CD14-positive monocyte (primary cell): ENCODE measurements at regions of chr5 and their contacts with region 1.

Region 1: GRCh38 chr5:76867827-76868693 is 18.2 kb downstream of the S100Z start:
- DNase-seq: peak; percentile 40 to 65 (median 50)
- H3K4me3 ChIP-seq: no peak overlapping the region
- H3K4me3 Mint-ChIP-seq: no peak overlapping the region
- H3K27ac ChIP-seq: no peak overlapping the region
- H3K27ac Mint-ChIP-seq: peak overlapping the region in 4 of 7 donors; percentile 16 to 41 (median 22)
- H3K4me1 ChIP-seq: peaks cover 0 to 2% of the 10 kb centered on the region in 2 donors
- H3K4me1 Mint-ChIP-seq: peaks cover under 1% of the 10 kb centered on the region
- H3K27me3 ChIP-seq: no peaks in the 10 kb centered on the region
- H3K27me3 Mint-ChIP-seq: peaks cover 0 to 2% (median 0%) of the 10 kb centered on the region in 3 donors
- CTCF ChIP-seq: peak; percentile 71

Region 2: DNA sequence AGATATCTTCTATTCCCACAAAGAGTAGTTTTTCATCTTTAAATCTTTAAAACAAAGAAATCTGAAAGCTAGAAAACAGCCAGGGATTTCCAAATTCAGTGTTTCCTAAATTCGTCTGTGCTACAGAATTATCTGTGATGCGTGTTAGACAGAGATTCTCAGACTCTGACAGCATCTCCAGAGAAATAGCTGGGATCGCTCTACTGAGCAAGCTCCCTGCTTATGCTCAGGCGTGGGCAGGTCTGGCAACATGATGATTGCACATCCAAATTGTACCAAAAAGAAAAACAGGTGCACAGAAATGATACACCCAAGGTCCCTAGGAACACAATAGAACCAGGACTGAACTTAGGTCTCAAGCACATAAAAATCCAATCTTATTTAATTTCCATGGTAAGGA is 62.0 kb after region 1 on chr5:
- intact Hi-C with region 1: no loop called
- DNase-seq: no peak
- H3K4me3 ChIP-seq: no peak overlapping the region
- H3K4me3 Mint-ChIP-seq: no peak overlapping the region
- H3K27ac ChIP-seq: no peak overlapping the region
- H3K27ac Mint-ChIP-seq: no peak overlapping the region
- H3K4me1 ChIP-seq: no peaks in the 10 kb centered on the region
- H3K4me1 Mint-ChIP-seq: no peaks in the 10 kb centered on the region
- H3K27me3 ChIP-seq: no peaks in the 10 kb centered on the region
- H3K27me3 Mint-ChIP-seq: no peaks in the 10 kb centered on the region
- CTCF ChIP-seq: no peak

Region 3: DNA sequence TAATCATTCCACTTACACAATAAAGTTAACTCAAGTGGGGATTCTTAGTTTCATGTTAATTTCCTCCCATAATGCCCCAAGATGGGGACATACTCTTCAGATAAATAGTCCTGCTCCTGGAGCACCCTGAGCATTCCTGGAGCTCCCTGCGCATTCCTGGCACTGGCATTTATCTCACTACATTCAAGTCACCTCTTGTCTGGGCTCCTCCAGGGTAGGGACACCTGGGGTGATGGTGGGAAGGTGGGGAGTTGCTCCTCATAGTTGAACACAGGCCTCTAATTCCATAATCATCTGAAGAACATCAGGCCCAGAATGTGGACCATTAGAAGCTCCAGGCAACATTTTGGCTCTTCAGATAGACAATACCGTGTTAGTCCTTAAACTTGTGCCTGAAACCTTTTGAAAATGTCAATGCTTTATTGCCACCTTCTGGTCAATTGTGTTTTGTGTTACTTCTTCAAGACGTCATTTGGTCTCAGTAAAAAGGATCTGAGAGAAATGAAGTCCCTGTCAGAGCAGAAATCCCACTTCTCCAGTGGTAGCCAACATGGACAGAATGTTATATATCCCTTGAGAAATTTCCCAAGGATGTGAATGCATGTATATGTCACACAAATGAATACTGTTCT is 148.0 kb after region 1 on chr5:
- intact Hi-C with region 1: loop called (anchors 10 kb)
- DNase-seq: peak in 2 of 3 donors; percentile 22 to 23
- H3K4me3 ChIP-seq: no peak overlapping the region
- H3K4me3 Mint-ChIP-seq: no peak overlapping the region
- H3K27ac ChIP-seq: no peak overlapping the region
- H3K27ac Mint-ChIP-seq: no peak overlapping the region
- H3K4me1 ChIP-seq: no peaks in the 10 kb centered on the region
- H3K4me1 Mint-ChIP-seq: no peaks in the 10 kb centered on the region
- H3K27me3 ChIP-seq: no peaks in the 10 kb centered on the region
- H3K27me3 Mint-ChIP-seq: peaks cover 0 to 3% (median 2%) of the 10 kb centered on the region in 3 donors
- CTCF ChIP-seq: peak; percentile 27

Region 4: DNA sequence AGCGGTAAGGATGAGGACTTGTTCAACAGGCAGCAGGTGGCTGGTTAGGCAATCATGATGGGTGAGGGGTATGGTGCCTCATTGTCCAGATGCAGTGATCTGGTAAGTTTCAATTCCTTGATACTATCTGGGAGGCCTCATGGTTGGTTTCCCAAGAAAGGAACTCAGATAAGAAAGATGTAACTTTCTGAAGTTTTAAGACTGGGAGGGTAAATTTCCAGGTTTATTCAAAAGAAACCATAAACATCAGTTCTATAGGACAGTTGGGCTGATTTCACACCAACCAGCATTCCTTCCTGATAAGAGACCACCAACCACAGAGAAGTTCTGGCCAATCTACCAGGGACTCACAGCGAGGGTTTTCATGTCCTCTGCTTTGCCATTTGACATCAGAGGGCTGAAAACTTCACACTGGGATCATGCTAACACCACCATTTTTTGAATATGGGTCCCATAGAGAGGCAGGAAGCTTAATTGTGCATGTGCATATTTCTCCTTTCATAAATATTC is 161.4 kb after region 1 on chr5:
- intact Hi-C with region 1: loop called in 1 of 2 experiments (anchors 10 kb)
- DNase-seq: no peak
- H3K4me3 ChIP-seq: peak overlapping the region in 1 of 3 experiments; percentile 90
- H3K4me3 Mint-ChIP-seq: peak overlapping the region; percentile 97 to 99
- H3K27ac ChIP-seq: peak overlapping the region in 1 of 2 donors; percentile 92
- H3K27ac Mint-ChIP-seq: no peak overlapping the region
- H3K4me1 ChIP-seq: peaks cover 20 to 25% of the 10 kb centered on the region in 2 donors
- H3K4me1 Mint-ChIP-seq: peaks cover 28% of the 10 kb centered on the region
- H3K27me3 ChIP-seq: no peaks in the 10 kb centered on the region
- H3K27me3 Mint-ChIP-seq: peaks cover 2 to 3% (median 3%) of the 10 kb centered on the region in 3 donors
- CTCF ChIP-seq: no peak

Region 5: DNA sequence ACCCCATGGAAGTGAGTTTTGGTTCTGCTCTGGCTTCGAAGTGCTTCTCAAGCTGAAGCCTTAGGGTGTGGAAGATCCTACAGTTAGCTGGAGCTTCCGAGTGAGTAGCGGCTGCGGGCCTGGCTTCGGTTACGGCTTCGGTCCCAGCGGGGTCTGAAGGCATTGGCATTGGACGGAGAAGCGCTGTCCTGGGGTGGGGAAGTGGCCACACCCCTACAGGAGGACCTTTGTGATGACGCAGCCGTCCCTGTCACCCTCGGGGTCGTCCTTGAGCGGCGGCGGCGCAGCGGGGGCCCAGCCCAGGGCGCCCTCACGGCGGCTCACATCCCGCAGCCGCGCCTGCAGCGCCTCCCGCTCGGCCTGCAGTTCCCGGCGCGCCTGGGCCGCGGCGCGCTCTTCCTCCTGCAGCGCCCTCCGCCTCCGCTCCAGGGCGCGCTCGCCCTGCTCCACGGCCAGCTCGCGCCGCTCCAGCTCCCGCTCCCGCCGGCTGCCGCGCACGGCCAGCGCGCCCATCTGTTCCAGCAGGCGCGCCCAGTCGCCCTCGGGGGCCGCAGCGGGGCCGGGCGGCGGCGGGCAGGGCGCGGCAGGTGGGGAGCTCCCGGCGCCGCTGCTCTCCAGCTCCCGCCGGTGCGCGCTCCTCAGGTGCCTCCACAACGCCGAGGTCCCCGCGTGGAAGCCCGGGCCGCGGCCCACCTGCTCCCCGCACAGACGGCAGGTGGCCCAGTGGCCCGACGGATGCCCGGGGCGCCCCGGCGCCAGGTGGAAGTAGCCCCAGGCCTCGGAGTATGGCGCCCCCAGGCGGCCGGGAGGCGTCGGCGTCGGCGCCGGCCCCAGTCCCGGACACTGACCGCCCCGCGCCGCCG is 209.1 kb after region 1 on chr5:
- intact Hi-C with region 1: loop called (anchors 2 to 5 kb)
- DNase-seq: peak; percentile 53 to 65 (median 64)
- H3K4me3 ChIP-seq: peak overlapping the region; percentile 28 to 73 (median 42)
- H3K4me3 Mint-ChIP-seq: peak overlapping the region; percentile 76 to 83
- H3K27ac ChIP-seq: no peak overlapping the region
- H3K27ac Mint-ChIP-seq: peak overlapping the region in 1 of 7 donors; percentile 13
- H3K4me1 ChIP-seq: peaks cover 5 to 13% of the 10 kb centered on the region in 2 donors
- H3K4me1 Mint-ChIP-seq: peaks cover 14% of the 10 kb centered on the region
- H3K27me3 ChIP-seq: no peaks in the 10 kb centered on the region
- H3K27me3 Mint-ChIP-seq: peaks cover 1 to 2% (median 2%) of the 10 kb centered on the region in 3 donors
- CTCF ChIP-seq: peak; percentile 97

Region 6: GRCh38 chr5:77491783-77492652 is 624.0 kb after region 1 on chr5 and contains the start of gene WDR41:
- intact Hi-C with region 1: loop called in 1 of 2 experiments (anchors 10 kb)
- DNase-seq: peak; percentile 77 to 85 (median 80)
- H3K4me3 ChIP-seq: peak within 1 kb of the TSS; percentile 87 to 95 (median 90)
- H3K4me3 Mint-ChIP-seq: peak within 1 kb of the TSS; percentile 98 to 99
- H3K27ac ChIP-seq: peak within 1 kb of the TSS; percentile 89 to 95
- H3K27ac Mint-ChIP-seq: peak within 1 kb of the TSS; percentile 86 to 98 (median 94)
- H3K4me1 ChIP-seq: peaks cover 12 to 13% of the 10 kb centered on the region in 2 donors
- H3K4me1 Mint-ChIP-seq: peaks cover 26% of the 10 kb centered on the region
- H3K27me3 ChIP-seq: no peaks in the 10 kb centered on the region
- H3K27me3 Mint-ChIP-seq: no peaks in the 10 kb centered on the region
- CTCF ChIP-seq: peak; percentile 96
- polyA plus RNA-seq, gene WDR41: 19.6 to 64.0 (median 47.5) TPM